Heart left ventricle (tissue), 16 donors: ENCODE measurements at regions of chr5 and their contacts with region 1.

Region 1: GRCh38 chr5:157366741-157367674 is 93.0 kb upstream of the NIPAL4 start:
- DNase-seq: peak in 2 of 5 donors; percentile 23 to 37
- ATAC-seq: peak in 3 of 4 donors; percentile 52 to 66 (median 59)
- H3K4me3 ChIP-seq: no peak overlapping the region
- H3K27ac ChIP-seq: peak overlapping the region in 2 of 12 donors; percentile 5 to 79
- H3K4me1 ChIP-seq: peaks cover 0 to 11% (median 4%) of the 10 kb centered on the region in 12 donors
- H3K27me3 ChIP-seq: no peaks in the 10 kb centered on the region
- CTCF ChIP-seq: peak in 9 of 12 donors; percentile 21 to 56 (median 38)
- POLR2A ChIP-seq: no peak

Region 2: GRCh38 chr5:157476702-157477408 is 109.8 kb after region 1 on chr5:
- intact Hi-C with region 1: loop called in 5 of 10 experiments (anchors 5 to 10 kb)
- DNase-seq: no peak
- ATAC-seq: peak in 3 of 4 donors; percentile 35 to 72 (median 38)
- H3K4me3 ChIP-seq: no peak overlapping the region
- H3K27ac ChIP-seq: peak overlapping the region in 1 of 12 donors; percentile 77
- H3K4me1 ChIP-seq: peaks cover 0 to 34% (median 13%) of the 10 kb centered on the region in 12 donors
- H3K27me3 ChIP-seq: no peaks in the 10 kb centered on the region
- CTCF ChIP-seq: peak; percentile 58 to 76 (median 66)
- POLR2A ChIP-seq: no peak